IMR-90 (cell line): ENCODE measurements at regions of chr1 and their contacts with region 1.

Region 1: DNA sequence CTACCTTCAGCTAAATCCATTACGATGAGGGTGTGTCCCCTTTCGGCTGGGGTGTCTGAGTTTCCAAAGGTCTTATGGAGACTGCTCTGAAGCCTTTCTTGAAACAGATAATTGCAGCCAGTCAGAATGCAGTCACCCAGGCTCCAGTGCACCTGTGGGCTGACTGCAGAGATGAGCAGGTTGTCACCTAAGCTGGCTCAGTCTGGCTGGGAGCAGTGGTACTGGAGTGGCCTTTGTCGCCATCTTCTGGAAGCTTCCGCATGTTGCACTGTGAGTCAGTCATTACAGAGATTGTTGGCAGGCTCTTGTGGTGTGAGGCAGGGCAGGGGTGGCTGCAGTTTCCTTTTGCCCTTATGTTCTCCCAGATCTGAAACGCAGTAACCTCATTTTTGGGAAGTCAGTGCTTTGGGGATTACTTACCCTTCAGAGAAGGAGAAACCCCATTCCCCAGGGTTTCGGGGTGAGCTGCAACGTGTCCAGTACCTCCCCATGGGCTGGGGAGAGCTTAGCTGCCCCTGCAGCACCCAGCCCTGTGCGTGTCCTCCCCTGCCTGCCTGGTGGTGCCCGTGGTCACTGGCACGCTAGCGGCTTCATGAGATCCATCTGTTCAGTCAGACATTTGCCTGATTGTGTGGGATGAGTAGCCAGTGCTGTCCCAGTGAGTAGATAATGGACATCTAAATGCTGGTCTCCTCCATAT is 48.0 kb downstream of the SMYD2 start:
- DNase-seq: peak; percentile 81
- ATAC-seq: peak; percentile 85
- H3K4me3 ChIP-seq: no peak overlapping the region
- H3K27ac ChIP-seq: no peak overlapping the region
- H3K4me1 ChIP-seq: peaks cover 5% of the 10 kb centered on the region
- H3K27me3 ChIP-seq: no peaks in the 10 kb centered on the region
- CTCF ChIP-seq: peak; percentile 96
- POLR2A ChIP-seq: peak; percentile 65; the same call in 1 of the 2 replicates
- RAD21 ChIP-seq: peak; percentile 97

Region 2: DNA sequence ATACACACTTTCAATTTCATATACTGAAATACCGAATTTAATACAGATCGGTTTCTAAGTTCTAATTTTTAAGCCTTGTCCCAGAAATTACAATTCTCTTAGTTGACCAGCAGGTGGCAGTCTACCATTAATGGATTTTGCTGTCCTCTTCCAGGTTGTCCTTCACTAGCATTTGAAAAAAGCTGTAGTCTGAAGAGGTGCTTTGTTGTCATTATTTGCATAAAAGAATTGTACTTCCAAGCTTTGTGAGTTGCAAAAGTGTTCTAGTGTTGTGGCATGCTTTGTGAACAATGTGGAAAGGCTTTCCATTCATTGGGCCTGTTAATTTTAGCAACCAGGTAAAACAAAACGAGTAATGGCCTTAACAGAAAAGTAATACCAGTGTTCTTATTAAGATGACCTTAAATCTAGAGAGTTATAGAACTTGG is 1084.2 kb before region 1 on chr1:
- CTCF ChIA-PET with region 1: no interaction called
- POLR2A ChIA-PET with region 1: no interaction called
- dilution Hi-C with region 1: no loop called
- in situ Hi-C with region 1: no loop called
- intact Hi-C with region 1: loop called (anchors 10 kb)
- DNase-seq: peak; percentile 65
- ATAC-seq: peak; percentile 63
- H3K4me3 ChIP-seq: no peak overlapping the region
- H3K27ac ChIP-seq: no peak overlapping the region
- H3K4me1 ChIP-seq: peaks cover 1% of the 10 kb centered on the region; the same call in 1 of the 2 replicates
- H3K27me3 ChIP-seq: no peaks in the 10 kb centered on the region
- CTCF ChIP-seq: peak; percentile 79
- POLR2A ChIP-seq: no peak
- RAD21 ChIP-seq: peak; percentile 72

Region 3: DNA sequence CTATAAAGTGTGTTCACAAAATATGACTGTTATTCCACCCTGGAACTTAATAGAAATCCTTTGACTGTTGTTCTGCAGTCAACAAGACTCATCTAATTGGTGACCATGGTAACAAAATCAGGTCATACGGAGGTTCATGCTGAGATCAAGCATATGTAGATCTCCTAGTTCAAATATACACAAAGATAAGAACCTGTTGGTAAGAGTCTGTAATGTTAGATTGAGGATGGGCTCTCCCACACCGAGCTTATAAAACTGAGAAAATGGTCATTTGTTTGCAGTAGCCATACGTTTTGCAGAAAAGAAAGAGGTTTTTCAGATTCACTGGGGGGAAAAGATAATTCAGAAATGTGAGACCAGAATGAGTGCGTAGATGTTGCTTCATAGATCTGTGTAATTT is 809.8 kb before region 1 on chr1:
- CTCF ChIA-PET with region 1: no interaction called
- POLR2A ChIA-PET with region 1: no interaction called
- dilution Hi-C with region 1: no loop called
- in situ Hi-C with region 1: no loop called
- intact Hi-C with region 1: no loop called
- DNase-seq: no peak
- ATAC-seq: no peak
- H3K4me3 ChIP-seq: no peak overlapping the region
- H3K27ac ChIP-seq: no peak overlapping the region
- H3K4me1 ChIP-seq: no peaks in the 10 kb centered on the region
- H3K27me3 ChIP-seq: no peaks in the 10 kb centered on the region
- CTCF ChIP-seq: no peak
- POLR2A ChIP-seq: no peak
- RAD21 ChIP-seq: no peak

Region 4: GRCh38 chr1:214261206-214262123 is 67.5 kb before region 1 on chr1:
- CTCF ChIA-PET with region 1: interaction called, 79 read pairs
- POLR2A ChIA-PET with region 1: no interaction called
- dilution Hi-C with region 1: no loop called
- in situ Hi-C with region 1: no loop called
- intact Hi-C with region 1: loop called (anchors 1 kb)
- DNase-seq: peak; percentile 69
- ATAC-seq: peak; percentile 99
- H3K4me3 ChIP-seq: no peak overlapping the region
- H3K27ac ChIP-seq: no peak overlapping the region
- H3K4me1 ChIP-seq: peaks cover 4% of the 10 kb centered on the region; the same call in 1 of the 2 replicates
- H3K27me3 ChIP-seq: peaks cover 13% of the 10 kb centered on the region
- CTCF ChIP-seq: peak; percentile 91
- POLR2A ChIP-seq: no peak
- RAD21 ChIP-seq: peak; percentile 91

Region 5: GRCh38 chr1:214377886-214378285 is 49.0 kb after region 1 on chr1:
- CTCF ChIA-PET with region 1: no interaction called
- POLR2A ChIA-PET with region 1: no interaction called
- dilution Hi-C with region 1: no loop called
- in situ Hi-C with region 1: no loop called
- intact Hi-C with region 1: no loop called
- DNase-seq: peak; percentile 80
- ATAC-seq: peak; percentile 89
- H3K4me3 ChIP-seq: no peak overlapping the region
- H3K27ac ChIP-seq: peak overlapping the region; percentile 76; the same call in 1 of the 2 replicates
- H3K4me1 ChIP-seq: peaks cover 13% of the 10 kb centered on the region
- H3K27me3 ChIP-seq: no peaks in the 10 kb centered on the region
- CTCF ChIP-seq: no peak
- POLR2A ChIP-seq: no peak
- RAD21 ChIP-seq: no peak

Region 6: GRCh38 chr1:214584805-214585766 is 256.2 kb after region 1 on chr1:
- CTCF ChIA-PET with region 1: interaction called, 59 read pairs
- POLR2A ChIA-PET with region 1: no interaction called
- dilution Hi-C with region 1: no loop called
- in situ Hi-C with region 1: loop called (anchors 5 kb)
- intact Hi-C with region 1: loop called (anchors 1 kb)
- DNase-seq: peak; percentile 73
- ATAC-seq: peak; percentile 85
- H3K4me3 ChIP-seq: no peak overlapping the region
- H3K27ac ChIP-seq: no peak overlapping the region
- H3K4me1 ChIP-seq: peaks cover 2% of the 10 kb centered on the region; the same call in 1 of the 2 replicates
- H3K27me3 ChIP-seq: peaks cover 1% of the 10 kb centered on the region
- CTCF ChIP-seq: peak; percentile 93
- POLR2A ChIP-seq: no peak
- RAD21 ChIP-seq: peak; percentile 88

Region 7: GRCh38 chr1:214632091-214632490 is 303.2 kb after region 1 on chr1:
- CTCF ChIA-PET with region 1: interaction called, 13 read pairs
- POLR2A ChIA-PET with region 1: no interaction called
- dilution Hi-C with region 1: no loop called
- in situ Hi-C with region 1: no loop called
- intact Hi-C with region 1: loop called (anchors 1 kb)
- DNase-seq: no peak
- ATAC-seq: no peak
- H3K4me3 ChIP-seq: no peak overlapping the region
- H3K27ac ChIP-seq: no peak overlapping the region
- H3K4me1 ChIP-seq: no peaks in the 10 kb centered on the region
- H3K27me3 ChIP-seq: no peaks in the 10 kb centered on the region
- CTCF ChIP-seq: no peak
- POLR2A ChIP-seq: no peak
- RAD21 ChIP-seq: no peak